AG04450 (cell line): ENCODE measurements at regions of chr12 and their contacts with region 1.

Region 1: DNA sequence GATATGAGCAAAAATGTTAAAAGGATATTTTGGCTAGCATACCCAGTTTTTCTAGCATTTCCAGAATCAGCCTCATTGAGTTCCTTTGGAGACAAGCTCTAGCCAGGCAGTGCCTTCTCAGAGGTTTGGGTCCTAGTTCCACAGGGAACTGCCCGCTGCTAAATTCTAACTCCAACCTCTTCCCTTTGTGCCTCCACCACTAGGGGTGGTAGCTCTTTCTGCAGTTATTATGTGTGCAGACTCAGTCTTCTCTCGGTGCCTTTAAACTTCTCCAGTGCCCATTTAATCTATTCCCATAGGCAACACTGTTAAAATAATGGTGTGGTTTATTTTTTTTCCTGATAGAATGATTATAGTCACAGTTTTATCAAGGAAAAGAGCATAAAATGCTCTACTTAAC is 21.5 kb upstream of the SLC25A3 start:
- DNase-seq: no peak
- H3K4me3 ChIP-seq: no peak overlapping the region
- H3K27ac ChIP-seq: no peak overlapping the region
- H3K27me3 ChIP-seq: no peaks in the 10 kb centered on the region
- CTCF ChIP-seq: peak; percentile 41

Region 2: GRCh38 chr12:98388126-98388525 is 183.9 kb before region 1 on chr12:
- CTCF ChIA-PET with region 1: no interaction called
- POLR2A ChIA-PET with region 1: no interaction called
- DNase-seq: no peak
- H3K4me3 ChIP-seq: no peak overlapping the region
- H3K27ac ChIP-seq: no peak overlapping the region
- H3K27me3 ChIP-seq: peaks cover 10% of the 10 kb centered on the region
- CTCF ChIP-seq: no peak

Region 3: GRCh38 chr12:98490501-98491453 is 81.2 kb before region 1 on chr12:
- CTCF ChIA-PET with region 1: interaction called, 11 read pairs
- POLR2A ChIA-PET with region 1: no interaction called
- DNase-seq: peak; percentile 76
- H3K4me3 ChIP-seq: no peak overlapping the region
- H3K27ac ChIP-seq: peak overlapping the region; percentile 55
- H3K27me3 ChIP-seq: no peaks in the 10 kb centered on the region
- CTCF ChIP-seq: peak; percentile 94

Region 4: GRCh38 chr12:98538031-98538430 is 34.0 kb before region 1 on chr12:
- CTCF ChIA-PET with region 1: interaction called, 42 read pairs
- POLR2A ChIA-PET with region 1: no interaction called
- DNase-seq: no peak
- H3K4me3 ChIP-seq: no peak overlapping the region
- H3K27ac ChIP-seq: no peak overlapping the region
- H3K27me3 ChIP-seq: no peaks in the 10 kb centered on the region
- CTCF ChIP-seq: no peak

Region 5: GRCh38 chr12:98559666-98560065 is 12.3 kb before region 1 on chr12:
- CTCF ChIA-PET with region 1: interaction called, 25 read pairs
- POLR2A ChIA-PET with region 1: interaction called, 4 read pairs
- DNase-seq: no peak
- H3K4me3 ChIP-seq: no peak overlapping the region
- H3K27ac ChIP-seq: no peak overlapping the region
- H3K27me3 ChIP-seq: no peaks in the 10 kb centered on the region
- CTCF ChIP-seq: no peak

Region 6: GRCh38 chr12:98618952-98619351 is 46.9 kb after region 1 on chr12:
- CTCF ChIA-PET with region 1: interaction called, 15 read pairs
- POLR2A ChIA-PET with region 1: no interaction called
- DNase-seq: no peak
- H3K4me3 ChIP-seq: no peak overlapping the region
- H3K27ac ChIP-seq: no peak overlapping the region
- H3K27me3 ChIP-seq: no peaks in the 10 kb centered on the region
- CTCF ChIP-seq: no peak

Region 7: GRCh38 chr12:98828802-98829600 is 257.0 kb after region 1 on chr12:
- CTCF ChIA-PET with region 1: no interaction called
- POLR2A ChIA-PET with region 1: no interaction called
- DNase-seq: no peak
- H3K4me3 ChIP-seq: no peak overlapping the region
- H3K27ac ChIP-seq: no peak overlapping the region
- H3K27me3 ChIP-seq: no peaks in the 10 kb centered on the region
- CTCF ChIP-seq: no peak

Region 8: DNA sequence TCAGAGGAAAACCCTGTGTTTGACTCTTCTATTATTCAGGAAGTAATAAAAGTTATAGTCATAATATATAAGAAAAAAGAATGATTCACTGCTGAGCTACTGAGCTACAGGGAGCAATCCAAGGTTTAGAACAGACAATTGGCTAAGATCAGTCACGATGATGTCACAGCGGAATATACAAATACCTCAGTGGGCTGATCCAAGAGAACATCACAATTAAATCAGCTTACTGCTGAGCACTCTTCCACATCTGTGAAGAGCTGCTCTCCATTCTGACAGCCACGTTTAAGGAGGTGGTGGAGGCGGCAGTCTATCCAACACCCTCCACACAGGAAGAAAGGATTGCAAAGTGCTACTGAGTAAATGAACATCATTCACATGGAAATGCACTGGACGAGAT is 344.1 kb after region 1 on chr12:
- CTCF ChIA-PET with region 1: no interaction called
- POLR2A ChIA-PET with region 1: no interaction called
- DNase-seq: no peak
- H3K4me3 ChIP-seq: no peak overlapping the region
- H3K27ac ChIP-seq: no peak overlapping the region
- H3K27me3 ChIP-seq: no peaks in the 10 kb centered on the region
- CTCF ChIP-seq: no peak

Region 9: GRCh38 chr12:98998697-98999299 is 426.8 kb after region 1 on chr12:
- CTCF ChIA-PET with region 1: interaction called, 27 read pairs
- POLR2A ChIA-PET with region 1: no interaction called
- DNase-seq: no peak
- H3K4me3 ChIP-seq: no peak overlapping the region
- H3K27ac ChIP-seq: no peak overlapping the region
- H3K27me3 ChIP-seq: peaks cover 2% of the 10 kb centered on the region
- CTCF ChIP-seq: peak; percentile 72